ENCODE measurements at regions of chr19 and their contacts with region 1.

Region 1: GRCh38 chr19:13861732-13862531 is 15.0 kb upstream of the NANOS3 start:
- DNase-seq: peak; percentile 95
- ATAC-seq: peak; percentile 79
- H3K4me3 Mint-ChIP-seq: peak overlapping the region; percentile 75
- H3K27ac Mint-ChIP-seq: no peak overlapping the region; the same call in 1 of the 2 replicates
- H3K4me1 Mint-ChIP-seq: peaks cover 13% of the 10 kb centered on the region
- H3K27me3 Mint-ChIP-seq: peaks cover 42% of the 10 kb centered on the region
- CTCF ChIP-seq: peak; percentile 99

Region 2: DNA sequence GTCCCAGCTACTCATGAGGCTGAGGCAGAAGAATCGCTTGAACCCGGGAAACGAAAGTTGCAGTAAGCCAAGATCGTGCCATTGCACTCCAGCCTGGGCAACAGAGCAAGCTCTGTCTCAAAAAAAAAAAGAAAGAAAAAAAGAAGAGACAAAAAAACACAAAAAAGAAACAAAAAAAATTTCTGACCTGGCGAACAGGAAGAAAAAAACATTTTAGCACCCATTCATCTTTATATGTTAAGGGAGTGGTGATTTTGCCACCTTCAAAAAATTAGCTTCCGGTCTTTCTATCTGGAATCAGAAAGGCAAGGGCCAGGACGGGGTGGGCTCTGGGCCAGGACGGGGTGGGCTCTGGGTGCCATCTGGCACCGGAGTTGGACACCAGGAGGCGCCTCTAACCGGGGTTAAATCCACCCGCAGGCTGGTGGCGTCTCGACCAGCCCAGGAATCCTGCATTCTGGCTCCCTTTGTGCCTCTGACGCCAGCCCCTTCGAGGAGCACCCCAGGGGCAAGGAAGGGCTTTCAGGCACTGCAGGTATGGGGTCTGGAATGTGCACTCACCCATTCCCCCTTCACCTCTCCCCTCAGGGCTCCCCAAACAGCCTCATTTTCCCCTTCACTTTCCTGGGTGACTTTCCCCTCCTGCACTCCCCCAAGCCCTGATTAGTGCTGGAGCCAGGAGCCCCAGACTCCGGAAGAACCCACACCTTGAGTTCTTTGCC is 77.0 kb before region 1 on chr19:
- CTCF ChIA-PET with region 1: interaction called, 70 read pairs
- POLR2A ChIA-PET with region 1: no interaction called
- DNase-seq: peak; percentile 84
- ATAC-seq: peak; percentile 87
- H3K4me3 Mint-ChIP-seq: peak overlapping the region; percentile 8; the same call in 1 of the 2 replicates
- H3K27ac Mint-ChIP-seq: peak overlapping the region; percentile 64; the same call in 1 of the 2 replicates
- H3K4me1 Mint-ChIP-seq: peaks cover 14% of the 10 kb centered on the region
- H3K27me3 Mint-ChIP-seq: no peaks in the 10 kb centered on the region
- CTCF ChIP-seq: 0 out of 2 replicates have a peak, but pooled peaks have one; percentile 11

Region 3: GRCh38 chr19:13817615-13818371 is 44.1 kb before region 1 on chr19:
- CTCF ChIA-PET with region 1: interaction called, 29 read pairs
- POLR2A ChIA-PET with region 1: interaction called, 5 read pairs
- DNase-seq: peak; percentile 97
- ATAC-seq: peak; percentile 78
- H3K4me3 Mint-ChIP-seq: peak overlapping the region; percentile 73
- H3K27ac Mint-ChIP-seq: peak overlapping the region; percentile 98
- H3K4me1 Mint-ChIP-seq: 0 out of 2 replicates have a peak, but pooled peaks cover 3% of the 10 kb centered on the region
- H3K27me3 Mint-ChIP-seq: no peaks in the 10 kb centered on the region
- CTCF ChIP-seq: no peak

Region 4: DNA sequence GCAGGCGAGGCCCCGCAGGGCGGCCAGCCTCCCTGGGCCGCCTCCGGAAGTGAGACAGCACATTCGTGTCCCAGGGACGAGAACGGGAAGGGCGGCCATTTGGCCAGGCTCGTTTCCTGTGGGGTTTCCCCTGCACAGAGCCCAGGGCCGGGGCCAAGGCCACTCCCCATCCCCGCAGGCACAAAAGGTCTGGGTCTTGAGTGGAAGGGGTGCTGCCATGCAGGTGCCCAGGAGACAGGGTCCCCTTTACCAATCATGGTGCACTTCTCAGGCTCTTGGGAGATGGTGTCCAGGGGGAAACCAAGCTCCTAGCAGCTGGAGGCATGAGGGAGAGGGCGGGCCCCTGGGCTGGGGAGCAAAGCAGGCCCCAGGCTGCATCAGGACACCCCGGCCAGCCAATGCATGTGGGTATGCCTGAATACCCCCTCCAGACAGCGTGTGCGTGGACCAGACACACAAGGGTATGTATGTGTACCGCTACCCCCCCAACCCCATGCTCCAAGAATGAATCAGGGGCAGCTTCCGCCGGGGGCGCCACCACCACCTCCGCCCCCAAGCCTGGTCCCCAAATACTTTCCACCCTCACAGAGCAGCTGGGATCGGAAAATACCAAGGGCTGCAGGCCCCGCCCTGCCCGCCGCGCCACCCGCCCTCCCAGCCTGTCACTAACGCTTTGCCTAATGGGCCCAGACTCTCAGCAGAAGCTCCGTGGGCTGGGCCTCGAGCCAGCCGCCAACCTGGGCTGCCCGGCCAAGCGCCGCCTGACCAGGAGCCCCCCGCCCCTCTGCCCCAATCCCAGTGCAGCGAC is 22.6 kb before region 1 on chr19:
- CTCF ChIA-PET with region 1: interaction called, 24 read pairs
- POLR2A ChIA-PET with region 1: interaction called, 4 read pairs
- DNase-seq: peak; percentile 57
- ATAC-seq: peak; percentile 45
- H3K4me3 Mint-ChIP-seq: no peak overlapping the region
- H3K27ac Mint-ChIP-seq: no peak overlapping the region
- H3K4me1 Mint-ChIP-seq: peaks cover 27% of the 10 kb centered on the region
- H3K27me3 Mint-ChIP-seq: no peaks in the 10 kb centered on the region
- CTCF ChIP-seq: no peak

Region 5: GRCh38 chr19:13880059-13881043 is 18.4 kb after region 1 on chr19:
- CTCF ChIA-PET with region 1: interaction called, 15 read pairs
- POLR2A ChIA-PET with region 1: no interaction called
- DNase-seq: peak; percentile 98
- ATAC-seq: peak; percentile 83
- H3K4me3 Mint-ChIP-seq: peak overlapping the region; percentile 41
- H3K27ac Mint-ChIP-seq: peak overlapping the region; percentile 82
- H3K4me1 Mint-ChIP-seq: peaks cover 26% of the 10 kb centered on the region
- H3K27me3 Mint-ChIP-seq: peaks cover 36% of the 10 kb centered on the region
- CTCF ChIP-seq: peak; percentile 88

Region 6: GRCh38 chr19:13899912-13900584 is 38.1 kb after region 1 on chr19:
- CTCF ChIA-PET with region 1: no interaction called
- POLR2A ChIA-PET with region 1: no interaction called
- DNase-seq: no peak
- ATAC-seq: no peak
- H3K4me3 Mint-ChIP-seq: no peak overlapping the region
- H3K27ac Mint-ChIP-seq: no peak overlapping the region
- H3K4me1 Mint-ChIP-seq: no peaks in the 10 kb centered on the region
- H3K27me3 Mint-ChIP-seq: peaks cover 11% of the 10 kb centered on the region
- CTCF ChIP-seq: no peak

Measured in WTC11 (cell line).